ENCODE measurements at regions of chr17 and their contacts with region 1.

Region 1: GRCh38 chr17:31433091-31433790 is 41.8 kb downstream of the RAB11FIP4 start:
- DNase-seq: no peak
- ATAC-seq: no peak
- H3K4me3 ChIP-seq: no peak overlapping the region
- H3K27ac ChIP-seq: no peak overlapping the region
- H3K4me1 ChIP-seq: peaks cover 0 to 8% (median 0%) of the 10 kb centered on the region in 9 donors
- H3K27me3 ChIP-seq: peaks cover 0 to 38% (median 36%) of the 10 kb centered on the region in 7 donors
- CTCF ChIP-seq: no peak

Region 2: GRCh38 chr17:31517524-31517923 is 84.3 kb after region 1 on chr17:
- intact Hi-C with region 1: loop called in 2 of 10 experiments (anchors 2 kb)
- DNase-seq: no peak
- ATAC-seq: peak in 3 of 8 donors; percentile 19 to 67 (median 53)
- H3K4me3 ChIP-seq: no peak overlapping the region
- H3K27ac ChIP-seq: no peak overlapping the region
- H3K4me1 ChIP-seq: peaks cover 0 to 3% (median 0%) of the 10 kb centered on the region in 9 donors
- H3K27me3 ChIP-seq: no peaks in the 10 kb centered on the region
- CTCF ChIP-seq: peak in 8 of 9 donors; percentile 15 to 53 (median 42)

Region 3: GRCh38 chr17:31524926-31525800 is 91.9 kb after region 1 on chr17:
- intact Hi-C with region 1: loop called (anchors 1 to 5 kb)
- DNase-seq: peak; percentile 83 to 87
- ATAC-seq: peak; percentile 76 to 92 (median 84)
- H3K4me3 ChIP-seq: no peak overlapping the region
- H3K27ac ChIP-seq: no peak overlapping the region
- H3K4me1 ChIP-seq: peaks cover 0 to 14% (median 4%) of the 10 kb centered on the region in 9 donors
- H3K27me3 ChIP-seq: no peaks in the 10 kb centered on the region
- CTCF ChIP-seq: peak; percentile 73 to 96 (median 89)

Region 4: DNA sequence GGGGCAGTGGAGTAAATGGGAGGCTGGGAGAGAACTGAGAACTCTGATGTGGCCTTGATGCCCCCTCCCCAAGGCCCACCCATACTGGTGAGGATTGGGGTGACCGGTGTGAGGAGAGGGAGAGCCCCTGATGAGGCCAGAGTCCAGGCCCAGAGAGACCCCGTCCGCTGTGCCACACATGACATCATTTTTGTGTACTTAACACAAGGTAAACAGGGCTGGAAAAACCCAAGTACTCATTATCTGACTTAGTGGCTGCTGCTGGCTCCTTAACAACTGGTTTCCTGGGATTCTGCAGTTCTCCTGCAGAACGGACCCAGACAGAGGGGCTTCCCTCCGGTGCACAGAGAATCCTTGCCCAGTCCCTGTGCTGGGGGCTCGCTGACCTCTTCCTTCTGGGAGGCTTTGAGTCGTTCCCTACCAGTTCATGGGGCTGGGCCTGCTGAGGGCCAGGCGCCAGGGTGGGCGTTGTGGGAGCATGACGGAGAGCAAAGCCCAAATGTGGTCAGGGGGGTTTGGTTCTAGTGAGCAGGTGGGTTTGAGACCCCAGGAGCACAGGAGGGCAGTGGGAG is 165.8 kb after region 1 on chr17:
- intact Hi-C with region 1: no loop called
- DNase-seq: no peak
- ATAC-seq: no peak
- H3K4me3 ChIP-seq: no peak overlapping the region
- H3K27ac ChIP-seq: no peak overlapping the region
- H3K4me1 ChIP-seq: peaks cover 9 to 25% (median 17%) of the 10 kb centered on the region in 9 donors
- H3K27me3 ChIP-seq: no peaks in the 10 kb centered on the region
- CTCF ChIP-seq: no peak

Region 5: GRCh38 chr17:31702041-31702440 is 268.8 kb after region 1 on chr17:
- intact Hi-C with region 1: loop called in 1 of 10 experiments (anchors 5 kb)
- DNase-seq: no peak
- ATAC-seq: no peak
- H3K4me3 ChIP-seq: no peak overlapping the region
- H3K27ac ChIP-seq: no peak overlapping the region
- H3K4me1 ChIP-seq: peaks cover 0 to 9% (median 6%) of the 10 kb centered on the region in 9 donors
- H3K27me3 ChIP-seq: no peaks in the 10 kb centered on the region
- CTCF ChIP-seq: no peak

Region 6: DNA sequence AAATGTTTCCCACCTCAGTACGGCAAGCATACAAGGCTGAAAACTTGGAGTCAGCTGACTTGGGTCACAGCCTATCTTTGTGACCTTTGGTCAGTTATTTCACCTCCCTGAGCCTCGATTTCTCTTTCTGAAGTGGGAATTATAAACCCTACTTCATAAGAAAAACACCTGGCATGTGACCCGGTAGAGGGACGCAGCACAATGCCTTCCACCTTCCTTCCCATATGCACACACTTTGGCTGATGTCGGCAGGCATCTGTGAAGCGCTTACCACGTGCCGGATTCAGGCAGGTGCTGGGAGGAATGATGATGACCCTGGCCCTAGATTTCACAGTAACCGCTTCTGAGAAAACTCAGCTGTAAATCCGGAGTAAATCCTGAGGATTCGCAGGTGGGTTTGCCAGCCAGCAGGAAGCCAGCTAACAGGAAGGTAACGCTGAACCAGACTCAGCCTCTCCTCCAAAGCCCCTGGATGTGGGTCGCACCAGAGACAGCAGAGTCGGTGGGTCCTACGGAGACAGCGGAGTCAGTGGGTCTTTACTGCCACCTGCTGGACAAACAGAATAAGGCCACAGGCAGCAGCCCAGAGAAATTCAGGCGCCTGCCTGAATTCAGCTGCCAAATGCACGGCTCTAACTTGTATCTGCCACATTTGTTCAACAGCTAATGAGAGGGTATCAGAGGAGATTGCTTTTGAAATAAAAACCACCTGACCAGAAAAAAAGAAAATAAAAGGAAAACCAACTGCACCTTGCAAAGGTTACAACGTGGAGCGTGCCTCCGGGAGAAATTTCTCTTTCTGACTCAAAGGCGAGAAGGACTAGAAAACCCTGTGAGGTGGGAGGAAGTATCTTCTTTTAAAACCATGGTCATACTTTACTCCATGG is 409.2 kb after region 1 on chr17:
- intact Hi-C with region 1: loop called (anchors 1 to 10 kb)
- DNase-seq: peak; percentile 56 to 70
- ATAC-seq: peak; percentile 84 to 96 (median 92)
- H3K4me3 ChIP-seq: peak overlapping the region in 8 of 10 donors; percentile 9 to 38 (median 31)
- H3K27ac ChIP-seq: peak overlapping the region in 9 of 10 donors; percentile 8 to 57 (median 31)
- H3K4me1 ChIP-seq: peaks cover 8 to 30% (median 18%) of the 10 kb centered on the region in 9 donors
- H3K27me3 ChIP-seq: no peaks in the 10 kb centered on the region
- CTCF ChIP-seq: peak; percentile 92 to 99 (median 97)

Region 7: DNA sequence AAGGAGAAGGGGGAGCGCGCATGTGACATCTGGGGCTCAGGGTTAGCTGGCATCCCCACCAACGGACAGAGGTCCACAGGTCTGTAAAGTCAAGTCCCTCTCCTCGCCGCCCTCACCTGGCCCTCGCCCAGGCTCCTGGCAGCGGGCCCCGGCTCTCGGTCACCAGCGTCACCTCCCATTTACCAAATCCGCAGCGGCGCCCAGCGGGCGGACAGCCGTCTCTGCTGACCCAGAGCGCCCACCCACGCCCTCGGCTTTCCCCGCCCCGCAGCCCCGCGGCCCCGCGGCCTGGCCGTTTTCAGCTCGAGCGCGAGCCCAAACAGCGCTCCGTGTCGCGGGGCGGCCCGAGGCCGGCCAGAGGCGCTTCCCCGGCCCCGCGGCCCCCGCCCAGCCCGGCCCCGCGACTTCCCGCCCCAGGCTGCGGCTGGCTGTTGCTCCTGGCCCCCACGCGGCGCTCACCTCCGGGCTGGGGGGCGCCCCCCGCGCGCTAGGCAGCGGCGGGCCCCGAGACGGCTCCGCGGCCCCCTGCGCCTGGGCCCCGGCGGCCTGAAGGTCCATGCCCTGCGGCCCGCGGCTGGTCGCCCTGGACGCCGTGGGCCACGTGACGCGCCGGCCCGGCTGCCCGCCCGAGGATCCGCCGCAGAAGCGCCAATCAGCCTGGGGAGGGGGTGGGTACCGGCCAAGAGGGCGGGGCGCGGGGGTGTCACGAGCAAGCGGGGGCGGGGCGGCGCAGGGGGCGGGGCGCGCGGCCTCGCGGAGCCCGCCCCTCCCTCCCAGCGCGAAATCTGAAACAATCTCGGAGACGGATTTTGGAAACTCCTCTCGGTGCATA is 425.6 kb after region 1 on chr17 and contains the start of gene COPRS:
- intact Hi-C with region 1: loop called in 1 of 10 experiments (anchors 5 kb)
- DNase-seq: peak; percentile 90 to 92
- ATAC-seq: peak; percentile 86 to 97 (median 96)
- H3K4me3 ChIP-seq: peak within 1 kb of the TSS; percentile 5 to 77 (median 67)
- H3K27ac ChIP-seq: peak within 1 kb of the TSS; percentile 19 to 95 (median 80)
- H3K4me1 ChIP-seq: peaks cover 5 to 26% (median 17%) of the 10 kb centered on the region in 9 donors
- H3K27me3 ChIP-seq: no peaks in the 10 kb centered on the region
- CTCF ChIP-seq: peak in 5 of 9 donors; percentile 14 to 54 (median 46)
- total RNA-seq, gene COPRS: 41.3 to 64.9 (median 46.1) TPM